Left ventricle myocardium superior (tissue), 1 donor: ENCODE measurements at regions of chr6 and their contacts with region 1.

Region 1: GRCh38 chr6:128725271-128726233 is 157.4 kb upstream of the LAMA2 start:
- DNase-seq: no peak
- ATAC-seq: peak; percentile 40

Region 2: GRCh38 chr6:127737009-127737486 is 988.5 kb before region 1 on chr6:
- intact Hi-C with region 1: loop called (anchors 10 kb)
- DNase-seq: no peak
- ATAC-seq: peak; percentile 74

Region 3: DNA sequence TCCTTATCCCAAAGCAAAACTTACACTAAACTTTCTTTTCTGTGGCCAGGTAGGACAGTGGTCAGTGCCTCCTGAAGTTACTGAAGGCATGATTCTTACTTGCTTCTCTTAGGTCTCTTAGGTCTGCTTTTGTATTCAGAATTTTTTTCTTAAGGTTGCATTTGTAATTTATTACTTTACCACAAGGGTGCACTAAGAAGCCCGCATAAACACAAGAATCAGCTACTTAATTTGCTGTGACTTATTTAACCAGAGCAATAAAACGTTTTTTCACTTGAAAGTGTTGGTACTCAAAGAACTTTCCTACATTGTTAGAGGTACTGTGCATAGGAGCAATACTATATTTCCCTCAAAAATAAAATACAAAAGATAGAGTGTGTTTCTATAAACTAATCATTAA is 82.0 kb after region 1 on chr6:
- intact Hi-C with region 1: no loop called
- DNase-seq: no peak
- ATAC-seq: no peak

Region 4: GRCh38 chr6:129248946-129249345 is 523.4 kb after region 1 on chr6:
- intact Hi-C with region 1: loop called (anchors 10 kb)
- DNase-seq: no peak
- ATAC-seq: peak; percentile 75